CD8-positive, alpha-beta T cell (primary cell): ENCODE measurements at regions of chr16 and their contacts with region 1.

Region 1: GRCh38 chr16:8936421-8936820 is 27.3 kb downstream of the USP7 start:
- DNase-seq: peak; percentile 35 to 82 (median 75)
- ATAC-seq: peak; percentile 98
- H3K4me3 ChIP-seq: no peak overlapping the region
- H3K4me3 Mint-ChIP-seq: peak overlapping the region; percentile 30
- H3K27ac ChIP-seq: no peak overlapping the region
- H3K27ac Mint-ChIP-seq: peak overlapping the region; percentile 21
- H3K4me1 ChIP-seq: peaks cover 62% of the 10 kb centered on the region
- H3K4me1 Mint-ChIP-seq: peaks cover 87% of the 10 kb centered on the region
- H3K27me3 ChIP-seq: no peaks in the 10 kb centered on the region
- H3K27me3 Mint-ChIP-seq: no peaks in the 10 kb centered on the region
- CTCF ChIP-seq: peak; percentile 74

Region 2: GRCh38 chr16:8644211-8645140 is 291.9 kb before region 1 on chr16:
- CTCF ChIA-PET with region 1: no interaction called
- POLR2A ChIA-PET with region 1: no interaction called
- intact Hi-C with region 1: no loop called
- DNase-seq: peak in 7 of 9 experiments; percentile 10 to 58 (median 25)
- ATAC-seq: peak; percentile 76
- H3K4me3 ChIP-seq: no peak overlapping the region
- H3K4me3 Mint-ChIP-seq: peak overlapping the region; percentile 35
- H3K27ac ChIP-seq: peak overlapping the region; percentile 5 to 19
- H3K27ac Mint-ChIP-seq: peak overlapping the region; percentile 84
- H3K4me1 ChIP-seq: peaks cover 8% of the 10 kb centered on the region
- H3K4me1 Mint-ChIP-seq: peaks cover 14% of the 10 kb centered on the region
- H3K27me3 ChIP-seq: no peaks in the 10 kb centered on the region
- H3K27me3 Mint-ChIP-seq: no peaks in the 10 kb centered on the region
- CTCF ChIP-seq: no peak

Region 3: GRCh38 chr16:8919934-8920462 is 16.4 kb before region 1 on chr16:
- CTCF ChIA-PET with region 1: interaction called, 6 read pairs
- POLR2A ChIA-PET with region 1: interaction called, 4 read pairs
- intact Hi-C with region 1: loop called in 1 of 2 experiments (anchors 2 kb)
- DNase-seq: no peak
- ATAC-seq: peak; percentile 54
- H3K4me3 ChIP-seq: no peak overlapping the region
- H3K4me3 Mint-ChIP-seq: no peak overlapping the region
- H3K27ac ChIP-seq: no peak overlapping the region
- H3K27ac Mint-ChIP-seq: peak overlapping the region; percentile 41
- H3K4me1 ChIP-seq: peaks cover 8% of the 10 kb centered on the region
- H3K4me1 Mint-ChIP-seq: peaks cover 32% of the 10 kb centered on the region
- H3K27me3 ChIP-seq: no peaks in the 10 kb centered on the region
- H3K27me3 Mint-ChIP-seq: no peaks in the 10 kb centered on the region
- CTCF ChIP-seq: no peak

Region 4: GRCh38 chr16:8949541-8950418 is 13.4 kb after region 1 on chr16:
- CTCF ChIA-PET with region 1: interaction called, 20 read pairs
- POLR2A ChIA-PET with region 1: interaction called, 4 read pairs
- intact Hi-C with region 1: no loop called
- DNase-seq: no peak
- ATAC-seq: no peak
- H3K4me3 ChIP-seq: no peak overlapping the region
- H3K4me3 Mint-ChIP-seq: peak overlapping the region; percentile 44
- H3K27ac ChIP-seq: no peak overlapping the region
- H3K27ac Mint-ChIP-seq: peak overlapping the region; percentile 58
- H3K4me1 ChIP-seq: peaks cover 88% of the 10 kb centered on the region
- H3K4me1 Mint-ChIP-seq: peaks cover 89% of the 10 kb centered on the region
- H3K27me3 ChIP-seq: no peaks in the 10 kb centered on the region
- H3K27me3 Mint-ChIP-seq: no peaks in the 10 kb centered on the region
- CTCF ChIP-seq: no peak

Region 5: DNA sequence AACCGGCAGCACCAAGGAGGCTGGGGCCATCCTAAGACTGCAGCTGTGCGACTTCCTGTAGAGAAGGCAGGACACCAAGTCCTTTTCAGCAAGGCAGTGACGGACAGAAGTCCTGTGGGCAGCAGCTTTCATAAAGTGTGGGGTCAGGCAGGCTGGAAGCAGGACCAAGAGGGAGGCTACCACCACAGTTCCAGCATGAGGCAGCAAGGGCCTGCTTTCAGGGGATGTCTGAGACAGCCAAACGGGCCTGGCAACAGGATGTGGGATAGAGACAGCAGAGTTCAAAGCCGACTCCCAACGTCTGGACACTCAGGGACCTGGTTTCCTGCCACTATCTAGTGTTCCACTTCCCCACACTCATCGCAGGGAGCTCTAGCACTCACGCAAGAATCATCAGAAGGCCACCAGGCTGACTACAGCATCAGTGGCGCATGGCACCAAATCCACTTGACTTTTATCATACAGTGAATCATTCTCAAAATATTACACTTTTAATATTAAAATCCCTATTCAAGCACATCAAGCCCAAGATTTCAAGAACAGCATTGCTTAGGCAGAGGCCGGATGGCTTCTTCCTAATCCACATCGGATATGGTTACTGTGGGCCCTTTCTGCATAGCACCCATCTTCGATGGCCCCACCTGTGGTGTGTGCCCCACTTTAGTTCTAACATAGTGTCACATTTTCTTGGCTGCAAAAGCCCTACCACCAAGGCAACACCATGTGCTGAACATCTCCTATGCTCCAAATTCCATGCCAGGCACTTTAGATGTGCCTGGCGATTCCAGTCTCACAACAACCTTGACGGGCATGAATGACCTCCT is 22.1 kb after region 1 on chr16:
- CTCF ChIA-PET with region 1: interaction called, 18 read pairs
- POLR2A ChIA-PET with region 1: no interaction called
- intact Hi-C with region 1: loop called (anchors 2 kb)
- DNase-seq: peak in 5 of 9 experiments; percentile 17 to 62 (median 38)
- ATAC-seq: no peak
- H3K4me3 ChIP-seq: peak overlapping the region; percentile 24 to 25
- H3K4me3 Mint-ChIP-seq: peak overlapping the region; percentile 75
- H3K27ac ChIP-seq: peak overlapping the region; percentile 9 to 76
- H3K27ac Mint-ChIP-seq: peak overlapping the region; percentile 88
- H3K4me1 ChIP-seq: peaks cover 70% of the 10 kb centered on the region
- H3K4me1 Mint-ChIP-seq: peaks cover 77% of the 10 kb centered on the region
- H3K27me3 ChIP-seq: no peaks in the 10 kb centered on the region
- H3K27me3 Mint-ChIP-seq: no peaks in the 10 kb centered on the region
- CTCF ChIP-seq: no peak

Region 6: GRCh38 chr16:9134739-9135138 is 198.3 kb after region 1 on chr16:
- CTCF ChIA-PET with region 1: no interaction called
- POLR2A ChIA-PET with region 1: interaction called, 4 read pairs
- intact Hi-C with region 1: loop called (anchors 10 kb)
- DNase-seq: peak; percentile 32 to 76 (median 64)
- ATAC-seq: peak; percentile 80
- H3K4me3 ChIP-seq: no peak overlapping the region
- H3K4me3 Mint-ChIP-seq: no peak overlapping the region
- H3K27ac ChIP-seq: no peak overlapping the region
- H3K27ac Mint-ChIP-seq: peak overlapping the region; percentile 55
- H3K4me1 ChIP-seq: peaks cover 13% of the 10 kb centered on the region
- H3K4me1 Mint-ChIP-seq: peaks cover 20% of the 10 kb centered on the region
- H3K27me3 ChIP-seq: no peaks in the 10 kb centered on the region
- H3K27me3 Mint-ChIP-seq: no peaks in the 10 kb centered on the region
- CTCF ChIP-seq: peak; percentile 68

Region 7: DNA sequence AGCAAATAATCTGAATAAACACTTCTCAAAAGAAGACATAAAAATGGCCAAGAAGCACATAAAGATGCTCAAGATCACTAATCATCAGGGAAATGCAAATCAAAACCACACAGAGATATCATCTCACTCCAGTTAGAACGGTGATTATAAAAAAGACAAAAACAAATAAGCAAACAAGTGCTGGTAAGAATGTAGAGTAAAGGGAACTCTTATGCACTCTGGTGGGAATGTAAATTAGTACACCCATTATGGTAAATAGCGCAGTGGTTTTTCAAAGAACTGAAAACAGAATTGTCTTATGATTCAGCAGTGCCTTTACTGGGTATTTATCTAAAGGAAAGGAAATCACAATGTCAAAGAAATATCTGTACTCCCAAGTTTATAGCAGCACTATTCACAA is 498.2 kb after region 1 on chr16:
- CTCF ChIA-PET with region 1: no interaction called
- POLR2A ChIA-PET with region 1: no interaction called
- intact Hi-C with region 1: no loop called
- DNase-seq: no peak
- ATAC-seq: no peak
- H3K4me3 ChIP-seq: no peak overlapping the region
- H3K4me3 Mint-ChIP-seq: no peak overlapping the region
- H3K27ac ChIP-seq: no peak overlapping the region
- H3K27ac Mint-ChIP-seq: no peak overlapping the region
- H3K4me1 ChIP-seq: no peaks in the 10 kb centered on the region
- H3K4me1 Mint-ChIP-seq: no peaks in the 10 kb centered on the region
- H3K27me3 ChIP-seq: no peaks in the 10 kb centered on the region
- H3K27me3 Mint-ChIP-seq: peaks cover 5% of the 10 kb centered on the region
- CTCF ChIP-seq: no peak